Kidney (tissue), 22 donors: ENCODE measurements at regions of chr9 and their contacts with region 1.

Region 1: GRCh38 chr9:98207606-98208005 is 15.2 kb upstream of the CORO2A start:
- DNase-seq: peak in 1 of 5 donors; percentile 14
- H3K4me3 ChIP-seq: no peak overlapping the region
- H3K27ac ChIP-seq: no peak overlapping the region
- H3K4me1 ChIP-seq: no peaks in the 10 kb centered on the region
- H3K27me3 ChIP-seq: no peaks in the 10 kb centered on the region
- CTCF ChIP-seq: no peak

Region 2: DNA sequence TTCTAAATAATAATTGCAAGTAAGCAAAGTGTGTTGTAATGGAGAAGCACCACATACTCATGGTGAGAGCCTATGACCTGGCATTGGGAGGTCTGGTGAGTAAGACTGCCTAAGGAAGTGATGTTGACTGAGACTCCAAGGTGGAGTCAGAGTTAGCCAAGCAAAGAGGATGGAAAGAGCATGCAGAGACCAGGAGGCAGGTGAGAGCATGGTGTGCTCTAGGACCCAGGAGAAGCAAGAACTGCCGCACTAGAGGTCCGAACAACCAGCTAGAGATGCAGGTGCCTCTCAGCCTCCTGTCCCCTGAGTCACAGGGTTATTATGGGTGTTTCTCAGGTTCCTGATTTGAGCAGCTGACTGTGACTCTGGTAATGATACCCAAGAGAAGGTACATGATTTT is 197.2 kb before region 1 on chr9:
- intact Hi-C with region 1: no loop called
- DNase-seq: no peak
- H3K4me3 ChIP-seq: no peak overlapping the region
- H3K27ac ChIP-seq: peak overlapping the region in 1 of 2 donors; percentile 0
- H3K4me1 ChIP-seq: peaks cover 0 to 3% (median 0%) of the 10 kb centered on the region in 3 donors
- H3K27me3 ChIP-seq: no peaks in the 10 kb centered on the region
- CTCF ChIP-seq: no peak

Region 3: DNA sequence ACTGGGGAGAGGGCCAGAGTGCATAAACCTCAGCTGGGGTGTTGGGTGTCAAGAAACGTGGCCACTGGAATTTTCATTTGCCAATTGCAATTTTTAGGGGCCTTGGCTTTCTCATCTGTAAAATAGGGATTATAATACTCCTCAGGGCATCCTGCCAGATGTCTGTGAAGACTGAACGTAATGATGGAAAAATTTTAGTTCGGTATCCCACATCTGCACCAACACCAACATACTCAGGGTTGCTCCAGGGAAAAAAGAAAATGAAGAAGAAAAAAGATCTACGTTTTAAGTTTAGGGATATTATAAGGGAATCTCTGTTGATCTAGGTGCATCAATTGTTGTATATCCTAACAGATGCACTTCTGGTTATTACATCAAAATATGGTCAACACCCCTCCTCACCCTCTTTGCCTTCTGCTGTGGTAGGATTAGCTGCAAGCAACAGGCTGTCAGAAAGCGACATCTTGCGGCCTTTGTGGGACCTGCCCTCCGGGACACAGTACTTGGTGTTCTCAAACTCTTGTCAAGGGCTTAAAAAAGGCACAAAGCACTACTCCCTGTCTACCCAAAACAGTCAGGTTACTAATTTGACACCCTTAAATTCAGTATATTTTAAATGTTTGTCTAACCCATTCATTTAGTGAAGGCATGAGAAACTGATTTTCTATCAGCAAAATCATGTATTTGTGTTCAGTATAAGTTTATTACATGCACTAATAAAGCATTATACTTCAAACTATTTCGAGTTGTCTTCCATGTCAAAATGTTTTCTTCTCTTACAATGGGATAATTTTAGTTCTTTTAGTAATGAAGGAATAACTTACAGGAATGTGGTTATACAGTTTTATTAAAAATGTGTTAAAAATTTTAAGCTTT is 56.1 kb after region 1 on chr9:
- intact Hi-C with region 1: loop called (anchors 5 kb)
- DNase-seq: peak; percentile 80 to 89 (median 84)
- H3K4me3 ChIP-seq: no peak overlapping the region
- H3K27ac ChIP-seq: no peak overlapping the region
- H3K4me1 ChIP-seq: no peaks in the 10 kb centered on the region
- H3K27me3 ChIP-seq: no peaks in the 10 kb centered on the region
- CTCF ChIP-seq: peak; percentile 96